ENCODE measurements at regions of chr1 and their contacts with region 1.

Region 1: DNA sequence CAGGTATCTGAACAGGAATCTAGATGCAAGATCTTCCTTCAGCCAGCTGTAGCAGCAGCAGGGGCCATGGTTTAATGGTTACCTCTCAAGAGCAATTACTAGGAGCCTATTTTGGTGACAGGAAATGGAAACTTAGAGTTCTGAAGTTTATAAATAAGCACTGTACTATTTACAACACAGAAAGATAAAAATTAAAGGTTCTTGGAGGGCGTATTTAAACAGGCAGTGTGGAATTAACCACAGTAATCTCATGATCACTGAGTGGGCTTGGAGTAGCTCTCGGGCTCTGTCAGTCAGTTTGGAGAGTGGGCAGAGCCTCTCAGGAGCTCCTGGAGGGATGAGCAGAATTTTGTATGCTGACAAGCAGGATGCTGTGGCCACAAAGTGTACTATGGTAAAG is 10.2 kb upstream of the FCRL5 start:
- DNase-seq: no peak
- CTCF ChIP-seq: no peak

Region 2: DNA sequence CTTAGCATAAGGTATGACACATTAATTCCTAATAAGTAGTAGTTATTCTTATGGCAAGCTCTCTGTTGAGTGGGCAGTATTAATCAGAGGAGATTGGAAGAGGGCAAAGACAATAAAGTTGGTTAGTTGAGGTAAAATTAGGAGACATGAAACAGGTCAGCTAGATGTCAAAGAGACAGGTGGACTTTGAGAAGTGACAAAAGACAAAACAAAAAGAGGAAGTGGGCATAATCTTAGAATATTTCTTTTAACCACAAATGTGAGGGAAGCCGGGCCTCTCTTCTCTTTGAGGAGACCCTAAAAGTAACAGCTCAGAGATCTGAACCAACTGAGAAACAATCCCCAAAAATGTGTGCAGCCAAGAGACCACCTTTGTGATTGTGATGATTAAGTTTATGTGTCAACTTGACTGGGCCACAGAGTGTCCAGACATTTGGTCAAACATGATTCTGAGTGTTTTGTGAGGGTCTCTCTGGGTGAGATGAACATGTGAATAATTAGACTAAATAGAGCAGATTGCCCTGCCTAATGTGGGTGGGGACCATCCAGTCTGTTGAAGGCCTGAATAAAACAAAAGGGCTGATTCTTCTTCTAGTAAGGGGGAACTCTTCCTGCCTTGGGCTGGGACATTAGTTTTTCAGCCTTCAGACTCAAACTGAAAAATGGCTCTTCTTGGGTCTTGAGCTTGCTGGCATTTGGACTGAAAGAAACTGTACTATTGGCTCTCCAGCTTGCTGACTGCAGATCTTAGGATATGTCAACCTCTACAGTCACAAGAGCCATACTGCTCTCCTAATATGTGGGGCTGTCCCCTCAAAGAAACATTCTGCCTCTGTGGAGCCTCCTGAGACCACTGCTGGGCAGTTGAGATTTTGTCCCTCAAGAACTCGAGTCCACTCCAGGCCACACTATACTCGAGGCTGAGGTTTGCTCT is 50.2 kb before region 1 on chr1:
- in situ Hi-C with region 1: loop called (anchors 10 kb)
- DNase-seq: peak; percentile 56
- CTCF ChIP-seq: no peak

Region 3: DNA sequence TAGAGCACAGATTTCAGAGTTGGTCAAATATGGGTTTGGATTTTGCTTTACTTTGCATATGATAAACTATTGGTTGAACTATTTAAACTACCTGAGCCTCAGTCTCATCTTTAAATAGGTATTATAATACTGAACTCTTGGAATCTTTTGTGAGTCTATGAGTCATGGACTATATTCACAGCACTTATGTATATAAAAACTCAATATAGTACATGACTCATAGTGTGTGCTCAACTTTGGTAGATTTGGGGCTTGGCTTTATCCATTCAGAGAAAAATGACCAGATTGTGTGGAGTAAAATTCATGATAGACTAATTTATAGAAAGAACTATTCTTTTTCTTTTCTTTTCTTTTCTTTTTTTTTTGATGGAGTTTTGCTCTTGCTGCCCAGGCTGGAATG is 109.4 kb after region 1 on chr1:
- in situ Hi-C with region 1: no loop called
- DNase-seq: no peak
- CTCF ChIP-seq: no peak

Measured in GM13977 (cell line).